ENCODE measurements at regions of chr9 and their contacts with region 1.

Region 1: GRCh38 chr9:89701221-89701798 is 96.5 kb downstream of the GADD45G start:
- DNase-seq: peak; percentile 23 to 83 (median 50)
- ATAC-seq: peak; percentile 96
- H3K4me3 ChIP-seq: no peak overlapping the region
- H3K4me3 Mint-ChIP-seq: peak overlapping the region; percentile 53 to 89 (median 68)
- H3K27ac ChIP-seq: no peak overlapping the region
- H3K27ac Mint-ChIP-seq: peak overlapping the region; percentile 61 to 91 (median 65)
- H3K4me1 ChIP-seq: peaks cover 0 to 14% of the 10 kb centered on the region in 2 donors
- H3K4me1 Mint-ChIP-seq: peaks cover 1 to 85% (median 27%) of the 10 kb centered on the region in 7 donors
- H3K27me3 ChIP-seq: no peaks in the 10 kb centered on the region
- H3K27me3 Mint-ChIP-seq: no peaks in the 10 kb centered on the region

Region 2: DNA sequence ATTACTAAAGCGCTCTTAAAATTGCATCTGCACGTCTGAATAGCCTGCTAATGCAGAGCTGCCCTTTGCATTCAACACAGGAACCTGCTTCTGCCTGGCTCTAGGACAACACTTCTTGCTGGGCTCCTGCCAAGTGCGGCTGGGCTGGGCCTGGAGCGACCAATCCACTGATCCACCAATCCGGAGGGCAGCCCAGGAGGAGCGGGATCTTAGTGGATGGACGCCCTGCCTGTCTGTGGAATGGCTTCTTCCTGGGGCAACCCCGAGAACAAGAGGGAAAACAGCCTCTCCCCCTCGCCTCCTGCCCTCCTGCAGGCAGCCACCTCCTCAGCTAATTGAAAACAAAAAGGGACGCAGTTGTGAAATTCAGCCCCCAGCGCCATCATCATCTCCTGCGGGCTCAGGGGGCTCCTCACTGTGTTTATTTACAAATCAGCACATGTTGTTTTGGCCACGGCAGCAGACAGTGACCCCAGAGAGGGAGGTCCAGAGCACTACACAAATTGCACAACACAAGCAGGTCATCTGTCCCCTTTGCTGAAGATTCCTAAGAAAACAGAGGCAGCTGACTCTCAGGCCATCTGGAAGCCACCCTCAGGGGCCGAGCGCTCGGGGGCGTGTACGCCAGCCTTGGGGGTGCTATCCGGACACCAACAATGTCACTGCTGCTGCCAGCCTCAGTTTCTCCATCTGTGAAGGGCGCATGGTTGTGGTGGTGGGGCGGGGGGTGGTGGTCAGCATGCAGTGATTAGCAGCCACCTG is 39.2 kb before region 1 on chr9:
- CTCF ChIA-PET with region 1: no interaction called
- POLR2A ChIA-PET with region 1: no interaction called
- intact Hi-C with region 1: loop called in 1 of 2 experiments (anchors 5 kb)
- DNase-seq: no peak
- ATAC-seq: peak; percentile 61
- H3K4me3 ChIP-seq: no peak overlapping the region
- H3K4me3 Mint-ChIP-seq: no peak overlapping the region
- H3K27ac ChIP-seq: no peak overlapping the region
- H3K27ac Mint-ChIP-seq: no peak overlapping the region
- H3K4me1 ChIP-seq: no peaks in the 10 kb centered on the region
- H3K4me1 Mint-ChIP-seq: peaks cover 0 to 39% (median 0%) of the 10 kb centered on the region in 7 donors
- H3K27me3 ChIP-seq: no peaks in the 10 kb centered on the region
- H3K27me3 Mint-ChIP-seq: peaks cover 0 to 17% (median 4%) of the 10 kb centered on the region in 5 donors

Region 3: DNA sequence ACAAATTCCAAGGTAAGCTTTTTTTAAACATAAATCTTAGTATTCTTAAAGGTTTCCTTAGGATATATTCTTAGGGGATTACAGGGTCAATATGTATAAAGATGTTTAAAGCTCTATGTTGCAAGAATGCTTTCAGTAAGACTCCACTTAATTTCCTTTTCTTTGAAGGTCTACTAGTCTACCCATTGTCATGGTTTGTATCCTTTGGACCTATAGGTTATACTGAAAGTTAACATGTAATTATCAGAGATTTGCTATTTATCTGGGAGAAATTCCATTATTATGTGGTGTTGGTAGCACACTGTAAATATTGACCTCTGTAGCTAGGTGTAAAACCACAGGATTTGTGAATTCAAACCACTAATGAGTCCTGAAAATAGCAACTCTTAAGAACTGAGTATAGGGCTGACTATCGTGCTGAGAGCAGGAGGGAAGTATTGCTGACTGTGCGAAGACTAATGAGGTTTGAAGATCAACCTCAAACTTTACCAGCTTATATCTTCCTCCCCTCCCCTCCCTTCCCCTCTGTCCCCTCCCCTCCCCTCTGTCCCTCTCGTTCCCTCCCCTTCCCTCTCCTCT is 10.9 kb before region 1 on chr9:
- CTCF ChIA-PET with region 1: no interaction called
- POLR2A ChIA-PET with region 1: interaction called, 3 read pairs
- intact Hi-C with region 1: loop called in 1 of 2 experiments (anchors 1 kb)
- DNase-seq: no peak
- ATAC-seq: peak; percentile 36
- H3K4me3 ChIP-seq: no peak overlapping the region
- H3K4me3 Mint-ChIP-seq: peak overlapping the region in 1 of 10 donors; percentile 55
- H3K27ac ChIP-seq: no peak overlapping the region
- H3K27ac Mint-ChIP-seq: peak overlapping the region in 1 of 9 donors; percentile 83
- H3K4me1 ChIP-seq: no peaks in the 10 kb centered on the region
- H3K4me1 Mint-ChIP-seq: peaks cover 0 to 58% (median 13%) of the 10 kb centered on the region in 7 donors
- H3K27me3 ChIP-seq: no peaks in the 10 kb centered on the region
- H3K27me3 Mint-ChIP-seq: no peaks in the 10 kb centered on the region

Region 4: GRCh38 chr9:89721176-89721700 is 19.9 kb after region 1 on chr9:
- CTCF ChIA-PET with region 1: no interaction called
- POLR2A ChIA-PET with region 1: no interaction called
- intact Hi-C with region 1: no loop called
- DNase-seq: no peak
- ATAC-seq: peak; percentile 20
- H3K4me3 ChIP-seq: no peak overlapping the region
- H3K4me3 Mint-ChIP-seq: no peak overlapping the region
- H3K27ac ChIP-seq: no peak overlapping the region
- H3K27ac Mint-ChIP-seq: no peak overlapping the region
- H3K4me1 ChIP-seq: no peaks in the 10 kb centered on the region
- H3K4me1 Mint-ChIP-seq: peaks cover 8 to 20% (median 8%) of the 10 kb centered on the region in 7 donors
- H3K27me3 ChIP-seq: no peaks in the 10 kb centered on the region
- H3K27me3 Mint-ChIP-seq: no peaks in the 10 kb centered on the region

Region 5: GRCh38 chr9:89743573-89744361 is 42.5 kb after region 1 on chr9:
- CTCF ChIA-PET with region 1: no interaction called
- POLR2A ChIA-PET with region 1: no interaction called
- intact Hi-C with region 1: loop called (anchors 1 to 5 kb)
- DNase-seq: peak; percentile 23 to 82 (median 76)
- ATAC-seq: peak; percentile 88
- H3K4me3 ChIP-seq: peak overlapping the region; percentile 35
- H3K4me3 Mint-ChIP-seq: peak overlapping the region; percentile 62 to 85 (median 76)
- H3K27ac ChIP-seq: peak overlapping the region; percentile 37
- H3K27ac Mint-ChIP-seq: peak overlapping the region; percentile 49 to 94 (median 83)
- H3K4me1 ChIP-seq: peaks cover 18 to 65% of the 10 kb centered on the region in 2 donors
- H3K4me1 Mint-ChIP-seq: peaks cover 48 to 91% (median 87%) of the 10 kb centered on the region in 7 donors
- H3K27me3 ChIP-seq: no peaks in the 10 kb centered on the region
- H3K27me3 Mint-ChIP-seq: no peaks in the 10 kb centered on the region

Region 6: GRCh38 chr9:89919169-89919681 is 217.9 kb after region 1 on chr9:
- CTCF ChIA-PET with region 1: no interaction called
- POLR2A ChIA-PET with region 1: no interaction called
- intact Hi-C with region 1: loop called in 1 of 2 experiments (anchors 5 kb)
- DNase-seq: peak in 8 of 9 donors; percentile 14 to 53 (median 23)
- ATAC-seq: peak; percentile 77
- H3K4me3 ChIP-seq: no peak overlapping the region
- H3K4me3 Mint-ChIP-seq: peak overlapping the region in 3 of 10 donors; percentile 10 to 48 (median 17)
- H3K27ac ChIP-seq: no peak overlapping the region
- H3K27ac Mint-ChIP-seq: peak overlapping the region in 1 of 9 donors; percentile 15
- H3K4me1 ChIP-seq: no peaks in the 10 kb centered on the region
- H3K4me1 Mint-ChIP-seq: peaks cover 4 to 14% (median 8%) of the 10 kb centered on the region in 7 donors
- H3K27me3 ChIP-seq: no peaks in the 10 kb centered on the region
- H3K27me3 Mint-ChIP-seq: peaks cover 0 to 17% (median 7%) of the 10 kb centered on the region in 5 donors